ENCODE measurements at regions of chr20 and their contacts with region 1.

Region 1: GRCh38 chr20:62616728-62617621 is 25.3 kb upstream of the SLCO4A1 start:
- DNase-seq: peak; percentile 85
- ATAC-seq: peak; percentile 65
- H3K4me3 Mint-ChIP-seq: no peak overlapping the region
- H3K27ac Mint-ChIP-seq: peak overlapping the region; percentile 98
- H3K4me1 Mint-ChIP-seq: peaks cover 36% of the 10 kb centered on the region
- H3K27me3 Mint-ChIP-seq: peaks cover 8% of the 10 kb centered on the region

Region 2: DNA sequence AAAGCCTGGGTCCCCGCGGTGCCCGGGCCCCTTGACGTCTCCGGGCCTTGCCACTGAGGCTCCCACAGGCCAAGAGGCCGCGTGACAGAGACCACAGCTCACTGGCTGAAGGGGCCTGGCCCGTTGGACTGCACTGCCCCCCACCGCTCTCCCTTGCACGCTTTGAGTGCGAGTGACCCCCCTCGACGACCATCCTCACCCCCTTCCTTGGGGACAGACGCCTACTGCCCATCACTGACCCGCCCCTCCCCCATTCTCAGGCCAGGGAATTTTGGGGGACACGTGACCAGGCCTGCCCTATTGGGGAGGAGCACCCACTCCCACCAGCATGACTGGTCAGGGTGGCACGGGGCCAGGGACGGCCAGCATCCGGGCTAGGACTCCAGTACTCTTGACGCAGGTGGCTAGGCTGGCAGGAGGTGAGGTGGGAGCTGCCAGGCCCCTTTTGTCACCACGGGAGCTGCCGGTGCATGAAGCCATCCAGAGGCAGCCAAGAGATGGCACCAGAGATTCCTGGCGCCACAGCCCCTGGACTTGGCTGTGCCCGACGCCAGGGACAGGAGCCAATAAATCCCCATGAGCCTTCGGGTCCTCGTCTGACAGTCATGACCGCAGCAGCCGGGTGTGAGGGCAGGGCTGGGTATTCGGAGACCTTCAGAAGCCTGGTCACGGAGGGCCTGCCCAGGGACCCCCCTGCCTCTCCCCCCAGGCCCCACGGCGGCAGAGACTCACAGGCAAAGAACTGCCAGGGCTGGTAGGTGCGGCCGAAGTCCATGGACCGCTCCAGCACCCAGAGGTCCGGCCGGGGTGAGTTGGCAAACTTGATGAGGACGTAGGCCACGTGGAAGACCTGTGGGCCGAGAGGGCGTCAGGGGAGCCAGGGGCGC is 264.3 kb before region 1 on chr20:
- CTCF ChIA-PET with region 1: no interaction called
- DNase-seq: no peak
- ATAC-seq: no peak
- H3K4me3 Mint-ChIP-seq: no peak overlapping the region
- H3K27ac Mint-ChIP-seq: no peak overlapping the region
- H3K4me1 Mint-ChIP-seq: no peaks in the 10 kb centered on the region
- H3K27me3 Mint-ChIP-seq: no peaks in the 10 kb centered on the region

Region 3: DNA sequence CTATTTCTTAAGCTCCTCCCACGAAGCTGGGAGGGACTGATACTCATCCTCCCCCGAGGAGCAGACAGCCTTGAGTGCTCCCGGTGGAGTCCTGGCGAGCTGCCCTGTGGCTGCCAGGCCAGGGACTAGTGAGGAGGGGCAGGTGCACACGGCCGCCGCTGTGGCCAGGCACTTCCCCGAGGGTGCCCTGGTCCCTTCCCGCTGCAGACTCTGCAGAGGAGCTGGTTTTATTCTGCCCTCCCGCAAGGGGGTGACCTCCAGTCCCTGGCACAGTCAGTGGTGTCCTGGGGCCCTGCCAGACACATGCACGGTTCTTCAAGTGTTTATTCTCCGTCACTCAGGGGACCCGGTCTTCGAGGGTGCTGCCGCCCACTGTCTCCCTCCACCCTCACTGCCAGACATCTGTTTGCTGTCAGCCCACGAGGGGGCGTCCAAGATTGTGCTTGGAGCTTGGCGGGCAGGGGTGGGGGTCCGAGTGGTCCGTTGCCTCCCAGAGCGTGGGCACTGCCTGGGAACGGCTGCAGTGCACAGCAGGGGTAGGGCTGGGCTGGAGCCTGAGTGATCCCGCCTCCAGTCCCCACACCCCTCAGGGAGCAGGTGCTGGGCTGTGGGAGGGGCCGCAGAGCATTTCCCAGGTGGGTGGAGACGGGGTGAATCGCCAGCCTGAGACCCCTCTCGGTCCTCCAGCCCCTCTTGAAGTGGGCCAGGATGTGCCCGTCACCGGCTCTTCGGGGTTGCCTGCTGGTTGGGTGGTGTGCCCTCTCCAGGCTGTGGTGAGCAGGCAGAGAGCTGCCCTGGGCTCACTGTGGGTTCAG is 206.8 kb before region 1 on chr20:
- CTCF ChIA-PET with region 1: interaction called, 24 read pairs
- DNase-seq: no peak
- ATAC-seq: no peak
- H3K4me3 Mint-ChIP-seq: no peak overlapping the region
- H3K27ac Mint-ChIP-seq: no peak overlapping the region
- H3K4me1 Mint-ChIP-seq: peaks cover 23% of the 10 kb centered on the region
- H3K27me3 Mint-ChIP-seq: peaks cover 4% of the 10 kb centered on the region

Region 4: GRCh38 chr20:62500237-62500864 is 116.6 kb before region 1 on chr20:
- CTCF ChIA-PET with region 1: interaction called, 43 read pairs
- DNase-seq: peak; percentile 84
- ATAC-seq: peak; percentile 52
- H3K4me3 Mint-ChIP-seq: no peak overlapping the region
- H3K27ac Mint-ChIP-seq: peak overlapping the region; percentile 62
- H3K4me1 Mint-ChIP-seq: peaks cover 24% of the 10 kb centered on the region
- H3K27me3 Mint-ChIP-seq: no peaks in the 10 kb centered on the region

Region 5: GRCh38 chr20:62603021-62603906 is 13.7 kb before region 1 on chr20:
- CTCF ChIA-PET with region 1: interaction called, 69 read pairs
- DNase-seq: peak; percentile 85
- ATAC-seq: peak; percentile 72
- H3K4me3 Mint-ChIP-seq: peak overlapping the region; percentile 42
- H3K27ac Mint-ChIP-seq: peak overlapping the region; percentile 82
- H3K4me1 Mint-ChIP-seq: peaks cover 55% of the 10 kb centered on the region
- H3K27me3 Mint-ChIP-seq: peaks cover 31% of the 10 kb centered on the region

Region 6: DNA sequence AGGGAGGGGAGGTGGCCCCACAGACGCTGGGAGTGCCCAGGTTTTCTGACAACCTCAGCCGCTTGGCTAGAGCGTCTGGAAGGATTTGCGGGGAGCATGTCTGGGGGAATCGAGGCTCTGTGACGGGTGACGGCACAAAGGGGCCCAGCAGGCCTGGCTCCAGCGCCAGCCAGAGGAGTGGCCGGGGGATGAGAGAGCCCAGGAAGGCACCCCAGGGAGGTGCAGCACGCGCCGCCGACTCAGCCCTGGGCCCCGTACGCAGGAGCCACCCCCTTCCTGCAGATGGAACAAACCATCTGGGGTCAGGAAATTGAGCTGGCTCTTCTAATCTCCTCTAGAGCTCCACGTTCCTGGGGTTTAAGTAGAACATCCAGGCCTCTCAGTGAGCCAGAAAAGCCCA is 19.5 kb after region 1 on chr20:
- CTCF ChIA-PET with region 1: interaction called, 30 read pairs
- DNase-seq: no peak
- ATAC-seq: peak; percentile 61
- H3K4me3 Mint-ChIP-seq: no peak overlapping the region
- H3K27ac Mint-ChIP-seq: no peak overlapping the region
- H3K4me1 Mint-ChIP-seq: peaks cover 13% of the 10 kb centered on the region
- H3K27me3 Mint-ChIP-seq: peaks cover 48% of the 10 kb centered on the region

Region 7: GRCh38 chr20:62642040-62642665 is 25.2 kb after region 1 on chr20 and contains the start of gene SLCO4A1:
- CTCF ChIA-PET with region 1: interaction called, 30 read pairs
- DNase-seq: peak; percentile 90
- ATAC-seq: peak; percentile 91
- H3K4me3 Mint-ChIP-seq: peak within 1 kb of the TSS; percentile 82
- H3K27ac Mint-ChIP-seq: peak within 1 kb of the TSS; percentile 81
- H3K4me1 Mint-ChIP-seq: peaks cover 39% of the 10 kb centered on the region
- H3K27me3 Mint-ChIP-seq: peaks cover 19% of the 10 kb centered on the region
- total RNA-seq, gene SLCO4A1: 74.7 to 79.2 TPM

Region 8: DNA sequence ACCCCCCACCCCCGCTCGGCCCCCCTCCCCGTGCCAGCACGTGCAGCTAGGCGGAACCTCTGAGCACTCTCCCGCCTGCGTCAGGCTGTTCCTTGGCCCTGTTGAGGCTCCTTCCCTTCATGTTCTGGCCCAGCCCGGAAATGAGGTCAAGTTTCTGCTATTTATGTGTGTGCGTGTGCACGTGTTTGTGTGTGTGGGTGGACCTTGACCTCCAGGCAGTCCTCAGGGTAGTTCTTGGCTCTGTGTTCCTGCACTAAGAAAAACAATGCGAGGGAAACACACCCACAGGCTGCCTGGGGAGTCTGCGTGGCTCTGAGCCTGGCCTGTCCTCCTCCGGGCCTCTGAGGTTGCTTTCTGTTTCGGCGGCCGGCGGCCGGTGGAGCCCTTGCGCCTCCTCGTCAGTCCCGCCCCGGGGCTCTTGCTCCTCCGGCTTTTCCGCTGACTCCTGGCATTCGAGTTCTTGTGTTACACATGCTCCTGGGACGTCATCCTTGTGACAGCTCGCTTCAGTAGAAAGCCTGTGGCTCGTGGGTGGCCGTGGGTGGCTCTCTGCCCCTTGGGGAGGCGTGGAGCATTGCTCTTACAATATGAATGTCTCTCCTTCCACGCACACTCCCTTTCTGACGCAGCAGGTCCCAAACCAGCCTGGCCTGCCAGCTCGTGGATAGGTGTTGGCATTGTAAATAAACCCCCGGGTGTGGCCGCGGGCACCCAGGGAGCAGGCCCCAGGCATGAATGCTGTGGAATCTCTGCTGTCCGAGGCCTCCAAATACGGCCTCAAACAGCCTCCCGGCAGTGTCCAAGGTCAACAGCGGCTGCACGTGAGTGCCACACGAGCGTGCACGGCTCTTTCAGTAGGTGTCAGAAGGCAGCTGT is 35.3 kb after region 1 on chr20:
- CTCF ChIA-PET with region 1: interaction called, 12 read pairs
- DNase-seq: peak; percentile 88
- ATAC-seq: peak; percentile 64
- H3K4me3 Mint-ChIP-seq: peak overlapping the region; percentile 75
- H3K27ac Mint-ChIP-seq: peak overlapping the region; percentile 96
- H3K4me1 Mint-ChIP-seq: peaks cover 60% of the 10 kb centered on the region
- H3K27me3 Mint-ChIP-seq: no peaks in the 10 kb centered on the region